B cell (primary cell): ENCODE measurements at regions of chr6 and their contacts with region 1.

Region 1: DNA sequence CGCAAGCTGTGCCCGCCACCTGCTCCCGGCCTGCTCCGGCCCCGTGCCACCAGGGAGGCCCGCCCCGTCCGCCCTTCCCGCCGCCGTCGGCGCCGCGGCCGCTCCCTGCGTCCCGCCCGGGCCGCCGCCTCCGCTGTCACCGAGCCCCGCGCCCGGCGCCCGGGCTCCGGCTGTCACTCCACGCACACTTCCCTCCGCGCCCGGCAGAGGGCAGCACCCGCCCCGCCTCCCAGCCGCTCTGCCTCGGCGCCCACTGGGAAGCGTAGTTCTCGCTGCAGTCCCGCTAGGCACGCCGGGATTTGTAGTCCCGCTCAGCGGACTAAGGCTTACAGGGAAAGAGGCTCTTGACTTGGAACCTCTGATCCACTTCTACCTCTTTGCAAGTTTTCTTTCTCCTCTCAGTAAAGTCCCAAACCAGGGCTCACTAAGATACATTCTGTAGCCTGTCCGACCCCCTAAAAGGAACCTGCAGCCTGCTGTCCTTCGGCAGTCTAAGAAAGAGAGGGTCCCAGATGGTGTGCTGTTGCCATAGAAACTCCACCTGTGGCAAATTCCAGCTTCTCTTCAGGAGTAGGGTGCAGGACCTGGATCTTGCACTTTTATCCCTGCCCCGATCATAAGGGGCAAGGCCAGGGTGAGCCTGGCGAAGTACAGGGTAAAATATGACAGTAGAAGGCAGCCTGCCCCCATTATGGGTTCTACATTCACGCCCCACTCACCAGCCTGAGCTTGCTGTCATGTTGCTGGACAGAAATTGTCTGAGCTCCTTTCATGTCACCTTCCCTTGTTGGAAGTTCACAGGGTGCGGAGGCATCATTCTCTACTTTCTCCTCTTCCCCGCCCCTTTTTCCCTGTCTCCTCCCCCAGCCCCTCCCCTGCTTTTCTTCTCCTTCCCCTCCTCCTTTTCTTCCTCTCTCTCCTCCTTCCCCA is at the start of gene TFEB:
- DNase-seq: peak; percentile 94
- ATAC-seq: peak; percentile 51
- H3K4me3 ChIP-seq: peak within 1 kb of the TSS in 4 of 5 experiments; percentile 68 to 89 (median 80)
- H3K4me3 Mint-ChIP-seq: peak within 1 kb of the TSS; percentile 93
- H3K27ac ChIP-seq: peak within 1 kb of the TSS; percentile 81 to 89
- H3K27ac Mint-ChIP-seq: peak within 1 kb of the TSS; percentile 95
- H3K4me1 ChIP-seq: peaks cover 23 to 36% of the 10 kb centered on the region in 2 donors
- H3K4me1 Mint-ChIP-seq: peaks cover 32% of the 10 kb centered on the region
- H3K27me3 ChIP-seq: no peaks in the 10 kb centered on the region
- H3K27me3 Mint-ChIP-seq: no peaks in the 10 kb centered on the region
- CTCF ChIP-seq: peak; percentile 80
- total RNA-seq, gene TFEB: 147 and 148 TPM in 2 replicates

Region 2: DNA sequence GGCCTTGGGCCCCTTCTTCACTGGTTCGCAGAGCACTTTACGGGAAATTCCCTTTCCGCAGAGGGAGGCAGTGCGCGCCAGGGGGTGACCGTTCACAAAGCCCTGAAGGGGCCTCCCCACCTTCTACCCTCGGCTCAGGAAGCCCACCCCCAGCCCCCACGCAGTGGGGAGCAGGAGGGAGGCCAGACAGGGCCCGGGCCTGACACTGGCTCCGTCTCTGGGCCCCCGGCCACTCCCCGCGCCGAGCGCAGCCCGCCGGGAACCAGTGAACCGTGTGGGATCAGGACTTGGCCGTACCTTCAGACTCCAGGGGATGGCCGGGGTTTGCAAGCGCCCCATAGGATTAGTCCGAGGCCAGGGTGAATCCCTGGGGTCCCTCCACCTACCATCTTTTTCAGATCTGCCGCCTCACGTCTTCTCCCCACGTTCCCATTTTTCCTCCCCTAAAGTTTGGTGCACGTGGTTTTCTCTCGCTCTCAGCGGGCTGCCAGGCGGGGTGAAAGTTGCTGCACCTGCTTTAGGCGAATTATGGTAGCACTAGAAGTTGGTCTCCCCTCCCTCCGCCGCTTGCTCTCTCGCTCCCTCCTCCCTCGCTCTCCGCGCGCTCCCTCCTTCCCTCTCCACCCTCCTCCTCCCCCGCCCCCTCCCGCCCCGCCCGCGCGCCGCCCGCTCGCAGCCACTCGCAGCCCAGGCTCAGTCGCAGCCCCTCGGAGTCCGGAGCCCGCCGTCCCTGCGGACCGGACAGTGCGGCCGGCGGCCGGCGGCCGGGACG is 189.8 kb before region 1 on chr6 and contains the start of gene FOXP4:
- CTCF ChIA-PET with region 1: no interaction called
- POLR2A ChIA-PET with region 1: no interaction called
- intact Hi-C with region 1: loop called (anchors 1 kb)
- DNase-seq: peak; percentile 91
- ATAC-seq: peak; percentile 84
- H3K4me3 ChIP-seq: peak within 1 kb of the TSS; percentile 35 to 75 (median 70)
- H3K4me3 Mint-ChIP-seq: peak within 1 kb of the TSS; percentile 95
- H3K27ac ChIP-seq: peak within 1 kb of the TSS; percentile 11 to 32
- H3K27ac Mint-ChIP-seq: peak within 1 kb of the TSS; percentile 91
- H3K4me1 ChIP-seq: peaks cover 25 to 39% of the 10 kb centered on the region in 2 donors
- H3K4me1 Mint-ChIP-seq: peaks cover 33% of the 10 kb centered on the region
- H3K27me3 ChIP-seq: peaks cover 0 to 3% (median 0%) of the 10 kb centered on the region in 4 experiments
- H3K27me3 Mint-ChIP-seq: no peaks in the 10 kb centered on the region
- CTCF ChIP-seq: no peak
- total RNA-seq, gene FOXP4: 37.5 and 38.7 TPM in 2 replicates

Region 3: GRCh38 chr6:41683510-41684310 is 52.0 kb before region 1 on chr6:
- CTCF ChIA-PET with region 1: interaction called, 50 read pairs
- POLR2A ChIA-PET with region 1: interaction called, 24 read pairs
- intact Hi-C with region 1: loop called (anchors 2 kb)
- DNase-seq: peak; percentile 88
- ATAC-seq: peak; percentile 82
- H3K4me3 ChIP-seq: peak overlapping the region in 4 of 5 experiments; percentile 51 to 57 (median 52)
- H3K4me3 Mint-ChIP-seq: peak overlapping the region; percentile 66
- H3K27ac ChIP-seq: peak overlapping the region; percentile 29 to 46
- H3K27ac Mint-ChIP-seq: peak overlapping the region; percentile 86
- H3K4me1 ChIP-seq: peaks cover 9 to 26% of the 10 kb centered on the region in 2 donors
- H3K4me1 Mint-ChIP-seq: peaks cover 23% of the 10 kb centered on the region
- H3K27me3 ChIP-seq: no peaks in the 10 kb centered on the region
- H3K27me3 Mint-ChIP-seq: no peaks in the 10 kb centered on the region
- CTCF ChIP-seq: peak; percentile 90

Region 4: GRCh38 chr6:41697861-41698781 is 37.6 kb before region 1 on chr6:
- CTCF ChIA-PET with region 1: interaction called, 303 read pairs
- POLR2A ChIA-PET with region 1: interaction called, 342 read pairs
- intact Hi-C with region 1: loop called (anchors 5 kb)
- DNase-seq: no peak
- ATAC-seq: no peak
- H3K4me3 ChIP-seq: no peak overlapping the region
- H3K4me3 Mint-ChIP-seq: no peak overlapping the region
- H3K27ac ChIP-seq: peak overlapping the region in 1 of 2 donors; percentile 49
- H3K27ac Mint-ChIP-seq: peak overlapping the region; percentile 71
- H3K4me1 ChIP-seq: peaks cover 56 to 76% of the 10 kb centered on the region in 2 donors
- H3K4me1 Mint-ChIP-seq: peaks cover 79% of the 10 kb centered on the region
- H3K27me3 ChIP-seq: no peaks in the 10 kb centered on the region
- H3K27me3 Mint-ChIP-seq: no peaks in the 10 kb centered on the region
- CTCF ChIP-seq: no peak

Region 5: DNA sequence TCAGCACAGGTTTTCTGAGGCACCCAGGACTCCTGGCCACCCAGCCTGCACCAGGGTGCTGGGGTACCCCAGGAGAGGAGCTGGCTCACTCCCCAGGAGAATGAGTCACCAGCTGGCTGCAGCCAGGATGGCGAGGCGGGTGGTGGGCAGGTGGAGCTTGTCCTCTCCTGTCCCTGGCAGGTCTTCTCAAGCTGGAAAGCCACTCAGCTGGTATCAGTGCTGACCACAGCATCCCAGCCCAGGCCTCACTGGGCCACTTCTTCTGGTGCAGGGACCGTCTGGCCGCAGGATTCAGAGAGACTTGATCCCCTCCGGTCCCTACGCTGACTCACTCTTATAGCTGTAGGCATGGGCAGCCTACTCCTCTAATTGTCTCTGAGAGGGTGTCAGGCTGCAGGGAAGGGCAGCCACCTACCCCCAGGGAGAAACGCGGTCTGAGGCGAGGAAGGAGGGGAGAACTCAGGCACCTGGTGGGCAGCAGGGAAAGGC is 22.5 kb before region 1 on chr6:
- CTCF ChIA-PET with region 1: interaction called, 303 read pairs
- POLR2A ChIA-PET with region 1: interaction called, 342 read pairs
- intact Hi-C with region 1: loop called (anchors 2 kb)
- DNase-seq: no peak
- ATAC-seq: peak; percentile 2
- H3K4me3 ChIP-seq: peak overlapping the region in 1 of 5 experiments; percentile 19
- H3K4me3 Mint-ChIP-seq: peak overlapping the region; percentile 75
- H3K27ac ChIP-seq: peak overlapping the region; percentile 43 to 77
- H3K27ac Mint-ChIP-seq: peak overlapping the region; percentile 94
- H3K4me1 ChIP-seq: peaks cover 73 to 87% of the 10 kb centered on the region in 2 donors
- H3K4me1 Mint-ChIP-seq: peaks cover 91% of the 10 kb centered on the region
- H3K27me3 ChIP-seq: no peaks in the 10 kb centered on the region
- H3K27me3 Mint-ChIP-seq: no peaks in the 10 kb centered on the region
- CTCF ChIP-seq: no peak

Region 6: DNA sequence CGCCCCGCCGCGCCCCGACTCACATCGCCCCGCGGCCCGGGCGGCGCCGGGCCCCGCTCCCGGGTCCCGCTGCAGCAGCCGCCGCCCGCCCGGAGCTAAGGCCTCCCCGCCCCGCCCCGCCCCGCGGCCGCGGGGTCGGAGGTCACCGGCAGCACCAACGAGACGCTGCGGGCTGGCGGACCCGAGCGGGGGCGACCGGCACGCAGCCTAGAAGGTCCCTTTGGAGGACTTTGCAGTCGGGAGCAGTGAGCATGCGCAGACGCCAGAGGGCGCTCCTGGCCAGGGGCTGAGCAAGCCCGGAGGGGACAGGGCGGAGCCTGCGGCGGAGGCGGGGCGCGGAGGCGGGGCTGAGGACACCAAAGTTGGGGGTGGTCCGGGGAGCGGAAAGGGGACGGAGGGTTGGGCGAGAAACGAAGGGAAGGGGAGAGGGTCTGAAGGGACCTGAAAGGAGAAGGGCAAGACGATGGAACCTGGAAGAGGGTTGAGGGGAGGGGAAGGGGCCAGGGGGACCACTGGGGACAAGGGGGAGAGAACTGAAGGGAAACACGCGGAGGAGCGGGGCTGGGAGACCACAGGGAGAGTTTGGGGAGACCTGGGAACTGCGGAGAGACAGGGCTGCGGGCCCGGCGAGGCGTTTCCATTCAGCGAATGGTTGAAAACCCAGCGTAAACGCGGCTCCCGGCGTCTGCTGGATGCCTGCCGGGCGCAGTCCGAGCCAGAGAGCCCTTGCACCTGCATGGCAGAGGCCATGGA is 44.3 kb after region 1 on chr6 and contains the start of gene FRS3:
- CTCF ChIA-PET with region 1: no interaction called
- POLR2A ChIA-PET with region 1: no interaction called
- intact Hi-C with region 1: loop called (anchors 1 kb)
- DNase-seq: peak; percentile 98
- ATAC-seq: peak; percentile 96
- H3K4me3 ChIP-seq: peak within 1 kb of the TSS; percentile 49 to 79 (median 67)
- H3K4me3 Mint-ChIP-seq: peak within 1 kb of the TSS; percentile 96
- H3K27ac ChIP-seq: peak within 1 kb of the TSS in 1 of 2 donors; percentile 25
- H3K27ac Mint-ChIP-seq: peak within 1 kb of the TSS; percentile 77
- H3K4me1 ChIP-seq: peaks cover 20 to 28% of the 10 kb centered on the region in 2 donors
- H3K4me1 Mint-ChIP-seq: peaks cover 28% of the 10 kb centered on the region
- H3K27me3 ChIP-seq: no peaks in the 10 kb centered on the region
- H3K27me3 Mint-ChIP-seq: no peaks in the 10 kb centered on the region
- CTCF ChIP-seq: peak; percentile 79
- total RNA-seq, gene FRS3: 8.6 and 9.8 TPM in 2 replicates

Region 7: GRCh38 chr6:42050266-42051032 is 314.8 kb after region 1 on chr6 and contains the start of gene TAF8:
- CTCF ChIA-PET with region 1: interaction called, 4 read pairs
- POLR2A ChIA-PET with region 1: interaction called, 4 read pairs
- intact Hi-C with region 1: loop called (anchors 1 kb)
- DNase-seq: peak; percentile 95
- ATAC-seq: peak; percentile 69
- H3K4me3 ChIP-seq: peak within 1 kb of the TSS; percentile 86 to 100 (median 93)
- H3K4me3 Mint-ChIP-seq: peak within 1 kb of the TSS; percentile 99
- H3K27ac ChIP-seq: peak within 1 kb of the TSS; percentile 78 to 81
- H3K27ac Mint-ChIP-seq: peak within 1 kb of the TSS; percentile 99
- H3K4me1 ChIP-seq: peaks cover 43 to 45% of the 10 kb centered on the region in 2 donors
- H3K4me1 Mint-ChIP-seq: peaks cover 61% of the 10 kb centered on the region
- H3K27me3 ChIP-seq: no peaks in the 10 kb centered on the region
- H3K27me3 Mint-ChIP-seq: no peaks in the 10 kb centered on the region
- CTCF ChIP-seq: no peak
- total RNA-seq, gene TAF8: 62.1 and 67.0 TPM in 2 replicates